ENCODE measurements at regions of chr3 and their contacts with region 1.

Region 1: DNA sequence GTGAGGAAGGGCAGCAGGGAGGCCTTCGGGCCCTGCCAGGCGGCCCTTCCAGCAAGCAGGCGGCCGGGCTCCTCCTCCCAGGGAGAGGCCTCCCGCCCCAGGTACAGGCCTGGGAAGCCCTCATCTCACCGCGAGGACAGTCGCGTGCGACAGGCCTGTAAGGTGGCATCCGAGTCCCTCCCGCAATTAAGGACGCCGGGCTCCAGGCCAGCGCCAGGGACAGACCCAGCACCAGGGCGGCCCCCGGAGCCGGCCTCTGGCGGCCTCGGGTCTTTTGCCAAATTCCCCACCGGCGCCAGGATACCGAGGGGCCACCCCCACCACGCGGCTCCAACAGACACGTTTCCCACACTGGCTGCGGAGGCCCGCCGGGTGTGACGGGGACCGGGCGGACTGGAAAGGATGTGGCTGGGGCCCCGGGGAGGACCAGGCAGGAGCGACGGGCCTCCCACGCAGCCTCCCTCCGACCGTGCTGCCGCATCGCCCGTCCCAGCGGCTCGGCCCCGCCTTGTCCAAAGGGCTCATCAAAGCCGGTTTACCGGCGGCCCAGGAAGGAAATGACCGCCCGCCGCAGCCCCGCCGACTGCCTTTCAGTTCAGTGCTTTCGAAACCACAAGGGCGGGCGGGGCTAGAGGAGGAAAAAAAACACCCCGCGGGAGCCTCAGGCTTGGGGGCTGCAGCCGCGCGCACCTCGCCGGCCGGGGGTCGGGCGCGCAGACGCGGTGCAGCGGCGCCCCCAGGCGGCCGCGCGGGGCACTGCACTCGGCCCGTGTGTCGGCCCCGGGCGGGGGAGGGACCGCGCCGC is 11.3 kb downstream of the XXYLT1 start:
- DNase-seq: peak; percentile 93 to 97 (median 95)
- ATAC-seq: peak; percentile 86 to 88
- H3K4me3 ChIP-seq: peak overlapping the region; percentile 66
- H3K27ac ChIP-seq: peak overlapping the region; percentile 77
- H3K4me1 ChIP-seq: no peaks in the 10 kb centered on the region
- H3K27me3 ChIP-seq: no peaks in the 10 kb centered on the region

Region 2: DNA sequence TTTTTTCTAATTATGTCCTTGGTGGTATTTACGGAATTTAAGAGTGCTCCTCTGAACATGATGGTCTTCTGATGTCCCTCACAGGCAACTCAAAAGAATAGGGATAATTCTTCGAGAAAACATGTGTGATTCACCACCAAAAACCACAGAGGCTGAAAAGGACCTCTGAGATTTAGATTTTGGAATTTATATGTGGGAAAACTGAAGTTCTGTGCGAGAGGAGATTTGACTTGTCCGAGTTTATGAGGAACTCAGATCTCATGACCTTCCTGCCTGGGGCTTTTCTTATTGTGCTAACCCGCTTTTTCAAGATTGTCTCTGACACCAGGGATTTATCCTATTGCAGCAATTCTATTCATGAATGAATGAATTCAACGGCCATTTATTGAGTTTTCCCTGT is 431.6 kb before region 1 on chr3:
- intact Hi-C with region 1: no loop called
- DNase-seq: no peak
- ATAC-seq: no peak
- H3K4me3 ChIP-seq: no peak overlapping the region
- H3K27ac ChIP-seq: no peak overlapping the region
- H3K4me1 ChIP-seq: peaks cover 2% of the 10 kb centered on the region
- H3K27me3 ChIP-seq: no peaks in the 10 kb centered on the region

Region 3: GRCh38 chr3:195001961-195002861 is 257.5 kb before region 1 on chr3:
- intact Hi-C with region 1: loop called in 3 of 4 experiments (anchors 5 to 10 kb)
- DNase-seq: peak; percentile 41 to 86 (median 85)
- ATAC-seq: peak; percentile 37 to 53
- H3K4me3 ChIP-seq: no peak overlapping the region
- H3K27ac ChIP-seq: no peak overlapping the region
- H3K4me1 ChIP-seq: peaks cover 6% of the 10 kb centered on the region
- H3K27me3 ChIP-seq: no peaks in the 10 kb centered on the region

Region 4: DNA sequence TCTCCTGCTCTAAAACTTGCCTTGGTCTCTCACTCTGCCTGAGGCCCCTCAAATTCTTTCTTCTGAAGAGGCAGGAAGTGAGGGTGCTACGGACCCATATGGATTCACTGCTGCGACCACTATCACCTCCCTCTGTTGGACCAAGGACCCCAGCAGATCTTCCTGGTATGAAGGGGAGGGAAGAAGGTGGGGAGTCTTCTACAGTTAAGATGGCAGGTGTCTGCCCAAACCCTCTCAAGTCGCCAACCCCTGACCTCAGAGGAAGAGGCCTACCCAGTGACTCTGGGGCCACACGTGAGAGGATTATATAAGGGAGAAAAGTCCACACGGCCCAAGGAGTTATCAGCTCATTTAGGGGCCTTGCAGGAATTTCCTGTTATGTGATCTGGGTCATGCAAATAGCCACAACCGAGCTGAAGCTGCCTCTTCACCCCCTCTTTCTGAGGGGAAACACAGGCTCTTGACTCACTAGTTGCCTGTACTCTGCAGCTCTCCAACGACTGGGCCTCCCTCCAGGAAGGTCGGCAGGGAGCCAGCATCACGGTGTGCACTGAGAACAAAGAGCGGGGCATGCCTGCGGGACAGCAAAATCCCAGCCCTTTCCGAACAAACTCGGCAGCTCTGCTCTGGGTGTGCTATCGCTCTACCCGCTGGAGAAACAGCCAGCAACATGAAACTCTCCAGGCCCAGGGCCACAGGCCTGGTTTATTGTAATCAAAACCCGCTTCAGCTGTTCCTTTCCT is 104.7 kb before region 1 on chr3:
- intact Hi-C with region 1: loop called in 1 of 4 experiments (anchors 10 kb)
- DNase-seq: peak; percentile 84 to 96 (median 95)
- ATAC-seq: peak; percentile 72 to 76
- H3K4me3 ChIP-seq: no peak overlapping the region
- H3K27ac ChIP-seq: peak overlapping the region; percentile 91
- H3K4me1 ChIP-seq: peaks cover 22% of the 10 kb centered on the region
- H3K27me3 ChIP-seq: no peaks in the 10 kb centered on the region

Measured in right cardiac atrium (tissue), 5 donors.